Natural killer cell (primary cell): ENCODE measurements at regions of chr2 and their contacts with region 1.

Region 1: GRCh38 chr2:135531231-135532228 is at the start of gene R3HDM1:
- DNase-seq: peak; percentile 88 to 99
- ATAC-seq: peak; percentile 80 to 93 (median 82)
- H3K4me3 ChIP-seq: peak within 1 kb of the TSS; percentile 79
- H3K4me3 Mint-ChIP-seq: no peak within 1 kb of the TSS
- H3K27ac ChIP-seq: peak within 1 kb of the TSS; percentile 92
- H3K27ac Mint-ChIP-seq: no peak within 1 kb of the TSS
- H3K4me1 ChIP-seq: peaks cover 7% of the 10 kb centered on the region
- H3K4me1 Mint-ChIP-seq: peaks cover 10 to 20% of the 10 kb centered on the region in 2 donors
- H3K27me3 ChIP-seq: no peaks in the 10 kb centered on the region
- H3K27me3 Mint-ChIP-seq: no peaks in the 10 kb centered on the region
- CTCF ChIP-seq: no peak
- total RNA-seq, gene R3HDM1: 34.9 to 48.6 (median 39.7) TPM

Region 2: DNA sequence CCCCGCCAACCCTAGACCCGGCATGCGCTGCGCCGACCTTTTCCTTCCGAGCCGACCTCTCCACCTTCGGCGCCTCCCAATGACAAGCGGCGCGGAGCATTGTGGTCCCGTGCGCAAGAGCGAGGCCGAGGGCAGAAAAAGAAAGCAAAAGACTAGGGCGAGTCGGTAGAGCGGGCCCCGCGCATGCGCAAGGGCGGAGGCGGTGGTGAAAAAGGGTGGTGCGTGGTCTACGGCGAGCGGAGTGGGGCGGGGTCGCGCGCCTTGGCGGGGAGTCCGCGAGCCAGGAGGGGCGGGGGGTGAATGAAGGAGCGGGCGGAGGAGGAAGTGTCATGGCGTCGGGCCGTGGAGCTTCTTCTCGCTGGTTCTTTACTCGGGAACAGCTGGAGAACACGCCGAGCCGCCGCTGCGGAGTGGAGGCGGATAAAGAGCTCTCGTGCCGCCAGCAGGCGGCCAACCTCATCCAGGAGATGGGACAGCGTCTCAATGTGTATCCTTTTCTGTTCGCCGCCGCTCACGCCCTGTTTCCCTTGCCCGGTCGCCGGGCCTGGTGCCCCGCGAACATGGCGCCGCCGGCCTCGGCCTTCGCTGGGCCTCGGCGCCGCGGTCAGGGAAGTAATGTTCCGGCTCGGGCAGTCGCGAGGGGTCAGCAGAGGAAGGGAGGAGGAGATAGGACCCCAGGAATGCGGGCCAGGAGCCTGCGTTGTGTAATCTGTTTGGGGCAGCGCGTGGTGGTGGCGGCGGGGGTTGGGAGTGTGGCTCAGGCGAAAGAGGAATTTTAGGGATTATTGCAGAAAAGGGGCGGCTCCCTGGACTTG is 612.8 kb before region 1 on chr2 and contains the start of gene CCNT2:
- intact Hi-C with region 1: loop called (anchors 1 kb)
- DNase-seq: peak; percentile 99 to 100
- ATAC-seq: peak; percentile 81 to 93 (median 82)
- H3K4me3 ChIP-seq: peak within 1 kb of the TSS; percentile 92
- H3K4me3 Mint-ChIP-seq: peak within 1 kb of the TSS; percentile 99
- H3K27ac ChIP-seq: peak within 1 kb of the TSS; percentile 98
- H3K27ac Mint-ChIP-seq: peak within 1 kb of the TSS; percentile 93 to 100
- H3K4me1 ChIP-seq: peaks cover 22% of the 10 kb centered on the region
- H3K4me1 Mint-ChIP-seq: peaks cover 46 to 56% of the 10 kb centered on the region in 2 donors
- H3K27me3 ChIP-seq: no peaks in the 10 kb centered on the region
- H3K27me3 Mint-ChIP-seq: peaks cover 4 to 9% of the 10 kb centered on the region in 2 donors
- CTCF ChIP-seq: no peak
- total RNA-seq, gene CCNT2: 86.9 to 93.1 (median 87.8) TPM

Region 3: DNA sequence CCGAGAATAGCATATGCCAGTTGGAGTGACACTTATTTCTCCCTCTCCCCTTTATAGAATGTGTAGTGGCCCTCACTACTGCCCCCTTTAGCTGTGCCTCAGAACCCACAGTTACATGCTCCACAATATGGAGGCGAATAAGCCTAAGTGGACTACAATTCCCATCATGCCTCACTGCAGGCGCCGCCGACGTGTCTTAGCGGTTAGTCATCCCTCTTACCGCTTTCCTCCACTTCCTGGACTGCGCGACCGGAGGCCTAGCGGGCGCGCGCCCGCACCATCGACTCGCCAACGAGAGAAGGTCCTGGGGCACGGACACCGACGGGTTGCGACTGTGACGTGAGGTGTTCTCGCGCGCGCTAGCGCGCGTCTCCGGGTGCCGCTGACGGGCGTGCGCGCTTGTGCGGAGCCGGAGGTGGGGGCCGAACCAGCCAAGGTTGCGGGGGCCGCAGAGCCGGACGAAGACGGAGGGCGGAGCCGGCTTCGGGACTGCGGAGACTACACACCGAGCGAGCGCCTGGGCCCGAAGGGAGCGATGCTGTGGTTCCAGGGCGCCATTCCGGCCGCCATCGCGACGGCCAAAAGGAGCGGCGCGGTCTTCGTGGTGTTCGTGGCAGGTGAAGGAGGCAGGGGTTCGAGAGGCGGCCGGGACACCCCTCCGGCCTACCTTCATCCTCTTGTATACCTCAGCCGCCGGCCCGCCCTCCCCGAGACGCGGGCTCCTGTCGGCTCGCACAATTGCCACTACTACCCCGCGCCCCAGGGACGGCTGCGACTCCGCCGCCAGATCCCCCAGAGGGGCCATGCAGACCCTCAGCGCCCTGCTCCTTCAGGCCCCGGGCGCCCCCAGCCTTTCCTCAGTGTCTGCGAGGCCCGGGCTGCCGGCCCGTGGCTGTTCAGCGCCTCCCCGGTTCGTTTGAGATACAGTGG is 210.1 kb after region 1 on chr2 and contains the start of gene UBXN4:
- intact Hi-C with region 1: loop called (anchors 1 kb)
- DNase-seq: peak; percentile 84 to 98
- ATAC-seq: peak; percentile 86 to 97 (median 90)
- H3K4me3 ChIP-seq: peak within 1 kb of the TSS; percentile 100
- H3K4me3 Mint-ChIP-seq: peak within 1 kb of the TSS; percentile 95
- H3K27ac ChIP-seq: peak within 1 kb of the TSS; percentile 100
- H3K27ac Mint-ChIP-seq: peak within 1 kb of the TSS; percentile 95 to 96
- H3K4me1 ChIP-seq: no peaks in the 10 kb centered on the region
- H3K4me1 Mint-ChIP-seq: peaks cover 34 to 41% of the 10 kb centered on the region in 2 donors
- H3K27me3 ChIP-seq: no peaks in the 10 kb centered on the region
- H3K27me3 Mint-ChIP-seq: no peaks in the 10 kb centered on the region
- CTCF ChIP-seq: peak; percentile 22
- total RNA-seq, gene UBXN4: 129 to 153 (median 150) TPM

Region 4: DNA sequence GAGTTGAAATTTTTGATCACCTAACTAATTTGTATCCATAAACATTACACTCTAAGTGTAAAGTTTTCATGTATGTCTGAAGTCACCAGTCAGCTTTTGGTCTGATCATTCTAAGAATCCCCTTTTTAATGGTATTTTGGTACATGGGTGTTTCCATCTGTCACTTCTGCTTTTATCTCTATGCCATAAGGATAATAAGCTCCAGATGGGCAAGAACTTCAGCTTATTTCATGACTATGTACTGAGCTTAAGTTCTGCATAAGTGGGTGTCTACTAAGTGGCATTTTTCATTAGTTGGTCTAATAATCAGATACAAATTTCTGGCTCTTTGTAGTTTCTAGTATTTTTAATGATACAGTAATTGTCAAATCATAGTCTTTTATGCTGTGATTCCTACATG is 230.5 kb after region 1 on chr2:
- intact Hi-C with region 1: no loop called
- DNase-seq: no peak
- ATAC-seq: no peak
- H3K4me3 ChIP-seq: no peak overlapping the region
- H3K4me3 Mint-ChIP-seq: no peak overlapping the region
- H3K27ac ChIP-seq: no peak overlapping the region
- H3K27ac Mint-ChIP-seq: no peak overlapping the region
- H3K4me1 ChIP-seq: no peaks in the 10 kb centered on the region
- H3K4me1 Mint-ChIP-seq: no peaks in the 10 kb centered on the region
- H3K27me3 ChIP-seq: no peaks in the 10 kb centered on the region
- H3K27me3 Mint-ChIP-seq: no peaks in the 10 kb centered on the region
- CTCF ChIP-seq: no peak

Region 5: GRCh38 chr2:135876066-135876711 is 344.7 kb after region 1 on chr2 and contains the start of gene MCM6:
- intact Hi-C with region 1: loop called (anchors 2 kb)
- DNase-seq: peak; percentile 92 to 99
- ATAC-seq: peak; percentile 90 to 95 (median 92)
- H3K4me3 ChIP-seq: peak within 1 kb of the TSS; percentile 69
- H3K4me3 Mint-ChIP-seq: peak within 1 kb of the TSS; percentile 98
- H3K27ac ChIP-seq: peak within 1 kb of the TSS; percentile 90
- H3K27ac Mint-ChIP-seq: peak within 1 kb of the TSS; percentile 92 to 94
- H3K4me1 ChIP-seq: peaks cover 21% of the 10 kb centered on the region
- H3K4me1 Mint-ChIP-seq: peaks cover 28 to 37% of the 10 kb centered on the region in 2 donors
- H3K27me3 ChIP-seq: no peaks in the 10 kb centered on the region
- H3K27me3 Mint-ChIP-seq: no peaks in the 10 kb centered on the region
- CTCF ChIP-seq: no peak
- total RNA-seq, gene MCM6: 12.6 to 19.4 (median 15.9) TPM